Caco-2 (cell line): ENCODE measurements at regions of chr11 and their contacts with region 1.

Region 1: GRCh38 chr11:117972629-117973502 is 13.3 kb upstream of the IL10RA start:
- DNase-seq: no peak
- H3K4me3 ChIP-seq: no peak overlapping the region
- H3K4me3 Mint-ChIP-seq: no peak overlapping the region
- H3K27ac Mint-ChIP-seq: no peak overlapping the region
- H3K4me1 ChIP-seq: no peaks in the 10 kb centered on the region
- H3K4me1 Mint-ChIP-seq: no peaks in the 10 kb centered on the region
- H3K27me3 ChIP-seq: no peaks in the 10 kb centered on the region
- H3K27me3 Mint-ChIP-seq: peaks cover 4% of the 10 kb centered on the region
- CTCF ChIP-seq: no peak

Region 2: GRCh38 chr11:117817368-117818040 is 155.4 kb before region 1 on chr11:
- CTCF ChIA-PET with region 1: no interaction called
- POLR2A ChIA-PET with region 1: no interaction called
- intact Hi-C with region 1: no loop called
- DNase-seq: peak; percentile 86 to 93
- H3K4me3 ChIP-seq: no peak overlapping the region
- H3K4me3 Mint-ChIP-seq: peak overlapping the region; percentile 37
- H3K27ac Mint-ChIP-seq: no peak overlapping the region
- H3K4me1 ChIP-seq: peaks cover 52% of the 10 kb centered on the region
- H3K4me1 Mint-ChIP-seq: peaks cover 23% of the 10 kb centered on the region
- H3K27me3 ChIP-seq: no peaks in the 10 kb centered on the region
- H3K27me3 Mint-ChIP-seq: no peaks in the 10 kb centered on the region
- CTCF ChIP-seq: peak; percentile 100

Region 3: GRCh38 chr11:118046051-118046963 is 73.4 kb after region 1 on chr11:
- CTCF ChIA-PET with region 1: interaction called, 3 read pairs
- POLR2A ChIA-PET with region 1: interaction called, 12 read pairs
- intact Hi-C with region 1: no loop called
- DNase-seq: no peak
- H3K4me3 ChIP-seq: no peak overlapping the region
- H3K4me3 Mint-ChIP-seq: no peak overlapping the region
- H3K27ac Mint-ChIP-seq: no peak overlapping the region
- H3K4me1 ChIP-seq: no peaks in the 10 kb centered on the region
- H3K4me1 Mint-ChIP-seq: no peaks in the 10 kb centered on the region
- H3K27me3 ChIP-seq: no peaks in the 10 kb centered on the region
- H3K27me3 Mint-ChIP-seq: peaks cover 25% of the 10 kb centered on the region
- CTCF ChIP-seq: no peak

Region 4: DNA sequence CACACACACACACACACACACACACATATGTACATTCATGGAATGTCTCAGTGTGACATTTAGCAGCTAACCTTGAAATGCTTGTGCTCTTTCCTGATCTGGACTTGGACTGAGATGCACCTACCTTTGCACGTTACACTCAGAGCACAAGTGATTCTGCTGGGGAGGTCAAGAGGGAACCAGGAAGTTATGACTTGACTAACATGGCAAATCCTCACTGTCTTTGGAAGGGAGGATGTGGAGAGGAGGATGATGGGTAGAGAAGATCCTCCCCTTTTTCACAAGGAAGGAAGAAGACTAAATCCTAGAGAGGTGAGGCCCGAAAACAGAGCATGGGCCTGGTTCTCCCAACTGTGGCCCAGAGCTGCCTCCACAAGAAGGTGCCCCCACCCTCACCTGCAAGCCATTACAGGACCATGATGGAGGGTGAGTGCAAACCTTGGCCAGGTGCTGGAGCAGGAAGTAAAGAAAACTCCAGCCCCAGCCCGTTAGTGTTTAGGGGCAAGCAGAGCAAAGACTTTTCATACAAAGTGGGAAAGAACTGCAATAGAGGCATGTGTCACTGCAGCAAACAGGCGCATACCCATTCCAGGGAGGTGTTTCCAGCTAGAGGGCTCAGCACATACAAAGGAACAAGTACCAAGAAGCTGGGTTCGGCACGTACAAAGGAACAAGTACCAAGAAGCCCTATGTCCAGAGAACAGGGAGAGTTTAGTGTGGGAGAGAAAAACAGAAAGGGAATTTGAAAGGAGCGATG is 153.4 kb after region 1 on chr11:
- CTCF ChIA-PET with region 1: no interaction called
- POLR2A ChIA-PET with region 1: no interaction called
- intact Hi-C with region 1: no loop called
- DNase-seq: peak; percentile 36 to 76
- H3K4me3 ChIP-seq: no peak overlapping the region
- H3K4me3 Mint-ChIP-seq: no peak overlapping the region
- H3K27ac Mint-ChIP-seq: no peak overlapping the region
- H3K4me1 ChIP-seq: no peaks in the 10 kb centered on the region
- H3K4me1 Mint-ChIP-seq: no peaks in the 10 kb centered on the region
- H3K27me3 ChIP-seq: no peaks in the 10 kb centered on the region; the same call in 1 of the 2 replicates
- H3K27me3 Mint-ChIP-seq: no peaks in the 10 kb centered on the region
- CTCF ChIP-seq: no peak